Heart left ventricle (tissue), 16 donors: ENCODE measurements at regions of chr1 and their contacts with region 1.

Region 1: DNA sequence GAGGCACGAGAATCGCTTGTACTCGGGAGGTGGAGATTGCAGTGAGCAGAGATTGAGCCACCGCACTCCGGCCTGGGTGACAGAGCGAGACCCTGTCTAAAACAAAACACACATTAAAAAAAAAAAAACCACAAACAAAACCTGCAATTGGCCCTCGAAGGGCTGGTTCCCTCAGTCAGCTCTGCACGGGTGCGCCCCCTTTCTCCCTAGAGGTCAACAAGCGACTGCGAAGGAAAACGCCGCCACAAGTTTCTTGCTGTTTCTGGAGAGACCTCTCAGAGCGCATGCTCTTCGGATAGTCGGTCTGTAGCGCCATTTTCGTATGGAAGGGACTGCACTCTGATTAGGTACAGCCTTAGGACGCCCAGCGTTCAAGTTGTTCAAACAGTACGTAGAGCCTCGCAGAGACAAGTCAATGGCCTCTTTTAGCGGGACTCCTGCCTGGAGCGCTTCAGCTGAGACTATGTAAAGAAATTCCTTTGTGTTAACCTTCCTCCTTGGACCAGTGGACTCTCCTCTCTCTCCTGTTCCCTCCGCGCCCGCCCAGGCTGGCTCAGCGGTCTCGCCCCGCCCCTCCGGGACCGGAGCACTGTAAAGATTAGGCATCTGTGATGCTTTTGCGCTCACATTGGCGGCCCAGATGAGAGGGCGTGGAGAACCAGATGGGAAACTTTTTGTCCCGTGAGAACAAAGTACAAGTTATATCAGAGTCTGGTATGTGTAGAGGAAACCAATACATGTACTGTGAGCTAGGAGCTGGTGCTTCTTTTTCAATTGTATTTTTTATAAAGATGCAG is 1.0 kb upstream of the CDC14A start:
- DNase-seq: peak; percentile 85 to 91 (median 88)
- ATAC-seq: peak; percentile 80 to 85 (median 82)
- H3K4me3 ChIP-seq: peak overlapping the region; percentile 66 to 99 (median 86)
- H3K27ac ChIP-seq: peak overlapping the region; percentile 22 to 98 (median 92)
- H3K4me1 ChIP-seq: peaks cover 0 to 35% (median 20%) of the 10 kb centered on the region in 12 donors
- H3K27me3 ChIP-seq: no peaks in the 10 kb centered on the region
- CTCF ChIP-seq: peak in 10 of 12 donors; percentile 20 to 61 (median 42)
- POLR2A ChIP-seq: peak in 1 of 2 donors; percentile 44

Region 2: GRCh38 chr1:99110140-99111041 is 1240.9 kb before region 1 on chr1:
- intact Hi-C with region 1: no loop called
- DNase-seq: no peak
- ATAC-seq: no peak
- H3K4me3 ChIP-seq: no peak overlapping the region
- H3K27ac ChIP-seq: no peak overlapping the region
- H3K4me1 ChIP-seq: no peaks in the 10 kb centered on the region
- H3K27me3 ChIP-seq: no peaks in the 10 kb centered on the region
- CTCF ChIP-seq: no peak
- POLR2A ChIP-seq: no peak

Region 3: GRCh38 chr1:100132566-100133477 is 218.5 kb before region 1 on chr1 and contains the starts of genes SASS6 and TRMT13:
- intact Hi-C with region 1: loop called in 5 of 10 experiments (anchors 1 to 10 kb)
- DNase-seq: peak; percentile 96 to 98 (median 97)
- ATAC-seq: peak; percentile 99
- H3K4me3 ChIP-seq: peak within 1 kb of the TSS; percentile 56 to 88 (median 78)
- H3K27ac ChIP-seq: peak within 1 kb of the TSS in 11 of 12 donors; percentile 46 to 82 (median 66)
- H3K4me1 ChIP-seq: peaks cover 0 to 32% (median 19%) of the 10 kb centered on the region in 12 donors
- H3K27me3 ChIP-seq: no peaks in the 10 kb centered on the region
- CTCF ChIP-seq: peak in 2 of 12 donors; percentile 9 to 13
- POLR2A ChIP-seq: peak in 1 of 2 donors; percentile 30
- total RNA-seq, gene SASS6: 1.5 to 2.2 (median 1.8) TPM
- total RNA-seq, gene TRMT13: 2.0 to 8.1 (median 5.9) TPM

Region 4: GRCh38 chr1:100265931-100266740 is 85.2 kb before region 1 on chr1 and contains the start of gene RTCA:
- intact Hi-C with region 1: loop called in 6 of 10 experiments (anchors 5 to 10 kb)
- DNase-seq: peak; percentile 96 to 99 (median 98)
- ATAC-seq: peak; percentile 98 to 100 (median 99)
- H3K4me3 ChIP-seq: peak within 1 kb of the TSS; percentile 62 to 99 (median 82)
- H3K27ac ChIP-seq: peak within 1 kb of the TSS; percentile 39 to 92 (median 82)
- H3K4me1 ChIP-seq: peaks cover 0 to 35% (median 23%) of the 10 kb centered on the region in 12 donors
- H3K27me3 ChIP-seq: no peaks in the 10 kb centered on the region
- CTCF ChIP-seq: peak in 1 of 12 donors; percentile 27
- POLR2A ChIP-seq: peak; percentile 14 to 93
- total RNA-seq, gene RTCA: 31.4 to 54.6 (median 36.3) TPM

Region 5: DNA sequence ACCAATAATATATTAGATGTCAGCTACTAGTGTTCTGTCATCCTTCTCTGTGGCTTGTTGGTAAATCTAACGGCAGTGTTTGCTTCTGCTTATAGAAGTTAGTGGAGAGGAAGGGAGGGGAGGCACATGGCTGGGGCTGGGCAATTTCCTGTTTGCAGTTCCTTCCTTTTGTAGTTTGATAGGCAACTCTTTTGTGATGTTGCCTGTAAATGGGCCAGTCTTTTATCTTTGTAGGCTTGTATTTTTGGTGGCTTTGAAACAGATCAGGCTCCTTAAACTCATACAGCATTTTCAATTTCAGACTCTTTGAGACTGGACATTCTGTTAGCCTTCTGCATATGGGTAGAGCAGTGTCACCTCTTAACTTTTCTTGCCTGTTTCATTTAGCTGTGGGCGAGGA is 49.1 kb after region 1 on chr1:
- intact Hi-C with region 1: loop called in 6 of 10 experiments (anchors 1 to 10 kb)
- DNase-seq: peak in 4 of 5 donors; percentile 38 to 58 (median 54)
- ATAC-seq: peak in 3 of 4 donors; percentile 70 to 88 (median 85)
- H3K4me3 ChIP-seq: peak overlapping the region in 2 of 12 donors; percentile 4 to 10
- H3K27ac ChIP-seq: peak overlapping the region; percentile 0 to 86 (median 54)
- H3K4me1 ChIP-seq: peaks cover 0 to 65% (median 7%) of the 10 kb centered on the region in 12 donors
- H3K27me3 ChIP-seq: no peaks in the 10 kb centered on the region
- CTCF ChIP-seq: no peak
- POLR2A ChIP-seq: peak in 1 of 2 donors; percentile 19

Region 6: DNA sequence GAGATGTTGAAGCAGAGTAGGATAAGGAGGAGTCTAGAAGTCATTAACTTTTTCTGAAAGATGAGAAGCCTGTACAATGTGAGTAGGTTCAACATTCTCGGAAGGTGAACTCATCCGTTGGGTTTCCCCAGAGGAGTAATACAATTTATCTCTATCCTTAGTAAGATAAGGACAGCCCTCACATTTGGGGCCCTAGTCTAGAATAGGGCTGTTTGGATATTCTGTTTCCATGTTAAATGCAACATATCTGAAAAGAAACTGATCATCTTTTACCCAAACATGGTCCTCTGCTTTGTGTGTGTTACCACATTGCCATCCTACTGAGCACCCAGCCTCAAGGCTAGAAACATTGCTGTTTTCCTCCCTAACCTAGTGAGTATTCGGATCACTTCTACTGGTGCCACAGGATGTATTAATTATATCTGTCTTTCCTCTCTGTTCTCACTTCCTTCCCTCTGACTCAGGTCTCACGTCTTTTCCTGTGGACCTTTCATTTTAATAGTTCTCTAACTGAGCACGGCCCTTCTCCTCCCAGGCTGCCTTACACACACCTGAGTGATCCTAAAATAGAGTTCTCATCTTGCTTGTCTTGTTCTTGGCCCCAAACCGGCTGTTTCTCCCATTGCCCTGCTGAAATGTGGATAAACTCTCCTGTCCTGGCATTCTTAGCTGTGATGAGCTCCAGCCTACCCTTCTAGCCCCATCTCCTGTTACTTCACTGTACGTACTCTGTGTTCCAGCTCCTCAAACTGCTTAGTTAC is 92.7 kb after region 1 on chr1:
- intact Hi-C with region 1: loop called in 7 of 10 experiments (anchors 5 to 10 kb)
- DNase-seq: no peak
- ATAC-seq: peak in 2 of 4 donors; percentile 59 to 86
- H3K4me3 ChIP-seq: peak overlapping the region in 1 of 12 donors; percentile 5
- H3K27ac ChIP-seq: peak overlapping the region in 10 of 12 donors; percentile 9 to 84 (median 44)
- H3K4me1 ChIP-seq: peaks cover 0 to 56% (median 9%) of the 10 kb centered on the region in 12 donors
- H3K27me3 ChIP-seq: no peaks in the 10 kb centered on the region
- CTCF ChIP-seq: peak in 1 of 12 donors; percentile 14
- POLR2A ChIP-seq: no peak